H1 (cell line): ENCODE measurements at regions of chr1 and their contacts with region 1.

Region 1: GRCh38 chr1:204128964-204129896 is 22.6 kb downstream of the ETNK2 start:
- DNase-seq: peak; percentile 56 to 94
- H3K4me3 ChIP-seq: peak overlapping the region in 2 of 4 experiments; percentile 19 to 47; a peak in 3 of 8 replicates
- H3K27ac ChIP-seq: peak overlapping the region; percentile 53; the same call in 1 of the 2 replicates
- H3K4me1 ChIP-seq: peaks cover 4 to 24% (median 7%) of the 10 kb centered on the region in 4 experiments
- H3K27me3 ChIP-seq: no peaks in the 10 kb centered on the region; a peak in 1 of 7 replicates
- CTCF ChIP-seq: peak in 2 of 3 experiments; percentile 83 to 84; a peak in 3 of 4 replicates
- EP300 ChIP-seq: no peak
- POLR2A ChIP-seq: peak in 1 of 2 experiments; percentile 49; a peak in 1 of 3 replicates
- RAD21 ChIP-seq: peak; percentile 81 to 88

Region 2: GRCh38 chr1:204013052-204013451 is 116.2 kb before region 1 on chr1:
- CTCF ChIA-PET with region 1: interaction called, 10 read pairs
- POLR2A ChIA-PET with region 1: no interaction called
- DNase-seq: no peak
- H3K4me3 ChIP-seq: no peak overlapping the region
- H3K27ac ChIP-seq: no peak overlapping the region
- H3K4me1 ChIP-seq: peaks cover 0 to 7% (median 0%) of the 10 kb centered on the region in 4 experiments; a peak in 2 of 7 replicates
- H3K27me3 ChIP-seq: no peaks in the 10 kb centered on the region
- CTCF ChIP-seq: no peak
- EP300 ChIP-seq: no peak
- POLR2A ChIP-seq: no peak
- RAD21 ChIP-seq: no peak

Region 3: GRCh38 chr1:204080163-204080903 is 48.9 kb before region 1 on chr1:
- CTCF ChIA-PET with region 1: interaction called, 107 read pairs
- POLR2A ChIA-PET with region 1: interaction called, 15 read pairs
- DNase-seq: peak; percentile 97
- H3K4me3 ChIP-seq: peak overlapping the region in 3 of 4 experiments; percentile 18 to 49 (median 36); a peak in 5 of 8 replicates
- H3K27ac ChIP-seq: peak overlapping the region; percentile 87
- H3K4me1 ChIP-seq: peaks cover 40 to 79% (median 69%) of the 10 kb centered on the region in 4 experiments
- H3K27me3 ChIP-seq: no peaks in the 10 kb centered on the region
- CTCF ChIP-seq: no peak
- EP300 ChIP-seq: peak in 1 of 2 experiments; percentile 82; a peak in 1 of 3 replicates
- POLR2A ChIP-seq: peak; percentile 66 to 83
- RAD21 ChIP-seq: no peak; a peak in 2 of 4 replicates

Region 4: DNA sequence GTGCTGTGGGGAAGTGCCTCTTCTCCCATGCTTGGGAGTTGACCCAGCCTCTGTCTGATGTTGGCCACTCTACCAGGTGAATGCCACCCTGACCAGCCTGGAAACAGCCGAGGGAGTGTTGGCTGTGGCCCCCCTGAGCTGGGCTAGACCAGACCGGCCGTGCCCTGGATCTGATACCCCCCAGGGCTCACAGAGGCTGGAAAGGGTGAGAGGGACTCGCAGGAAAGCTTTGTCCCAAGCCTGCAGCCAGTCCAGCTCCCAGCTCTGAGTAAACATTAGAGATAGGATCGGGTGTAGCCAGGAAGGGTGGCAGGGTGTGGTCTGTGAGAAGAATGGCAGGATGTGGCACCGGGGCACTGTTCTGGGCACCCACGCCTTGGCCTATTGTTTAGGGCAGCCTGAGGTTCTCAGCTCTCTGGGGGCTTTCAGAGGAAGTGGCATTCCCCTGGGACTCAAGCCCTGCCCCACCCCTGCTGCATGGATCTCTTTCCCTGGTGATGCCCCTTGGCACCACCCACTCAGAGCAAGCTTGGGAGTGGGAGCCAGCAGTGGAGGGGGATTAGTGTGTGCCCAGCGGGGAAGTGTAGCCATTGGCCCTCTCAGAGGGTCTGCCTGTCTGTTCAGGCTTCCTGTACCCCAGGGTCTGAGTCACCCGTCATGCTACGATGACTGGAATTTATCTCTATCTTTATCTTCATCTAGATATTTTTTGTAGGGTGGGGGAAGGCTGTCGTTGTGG is 24.9 kb before region 1 on chr1:
- CTCF ChIA-PET with region 1: interaction called, 11 read pairs
- POLR2A ChIA-PET with region 1: interaction called, 7 read pairs
- DNase-seq: no peak
- H3K4me3 ChIP-seq: no peak overlapping the region
- H3K27ac ChIP-seq: no peak overlapping the region
- H3K4me1 ChIP-seq: peaks cover 27 to 55% (median 36%) of the 10 kb centered on the region in 4 experiments
- H3K27me3 ChIP-seq: no peaks in the 10 kb centered on the region
- CTCF ChIP-seq: no peak
- EP300 ChIP-seq: no peak
- POLR2A ChIP-seq: no peak
- RAD21 ChIP-seq: no peak

Region 5: GRCh38 chr1:204145033-204145504 is 15.8 kb after region 1 on chr1:
- CTCF ChIA-PET with region 1: interaction called, 99 read pairs
- POLR2A ChIA-PET with region 1: interaction called, 8 read pairs
- DNase-seq: no peak
- H3K4me3 ChIP-seq: no peak overlapping the region
- H3K27ac ChIP-seq: no peak overlapping the region
- H3K4me1 ChIP-seq: peaks cover 5 to 29% (median 18%) of the 10 kb centered on the region in 4 experiments
- H3K27me3 ChIP-seq: no peaks in the 10 kb centered on the region; a peak in 1 of 7 replicates
- CTCF ChIP-seq: no peak
- EP300 ChIP-seq: no peak
- POLR2A ChIP-seq: no peak
- RAD21 ChIP-seq: no peak

Region 6: DNA sequence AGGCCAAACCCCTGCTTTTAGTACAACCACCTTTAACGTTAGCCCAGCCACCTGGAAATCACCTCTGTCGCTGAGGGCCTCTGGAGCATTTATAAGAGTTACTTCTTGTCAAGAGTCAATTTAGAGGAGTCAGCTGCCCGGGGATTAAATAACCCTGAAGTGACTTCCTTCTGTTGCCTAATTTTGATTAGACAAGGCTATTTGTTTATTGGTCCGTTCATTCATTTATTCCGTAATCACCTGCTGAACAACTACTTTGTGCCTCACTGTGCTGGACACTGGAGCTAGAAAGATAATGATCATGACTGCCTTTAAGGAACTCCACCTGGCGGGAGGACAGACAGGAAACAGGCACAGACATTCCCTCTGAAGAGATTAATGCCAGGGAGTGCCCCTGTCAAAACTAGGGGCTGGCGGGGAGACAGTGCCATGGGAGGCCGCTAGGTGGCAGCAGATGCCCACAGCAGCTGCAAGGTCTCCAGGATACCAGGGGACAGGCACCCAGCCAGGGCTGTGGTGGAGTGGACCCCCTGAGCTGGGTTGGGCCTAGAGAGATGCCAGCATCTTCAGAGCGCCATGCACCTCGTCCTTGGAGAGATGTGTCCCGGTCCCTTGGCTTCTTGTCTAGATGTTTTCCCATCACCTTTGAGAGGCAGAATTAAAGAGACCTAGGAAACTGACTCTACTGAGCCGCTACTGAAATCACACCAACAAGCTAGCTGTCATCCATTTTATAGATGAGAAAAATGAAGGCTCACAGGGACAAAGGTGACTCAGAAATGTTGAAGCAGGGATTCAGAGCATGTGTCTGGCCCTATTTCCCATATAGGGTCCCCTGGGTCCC is 33.2 kb after region 1 on chr1:
- CTCF ChIA-PET with region 1: interaction called, 21 read pairs
- POLR2A ChIA-PET with region 1: no interaction called
- DNase-seq: peak; percentile 63 to 100
- H3K4me3 ChIP-seq: no peak overlapping the region
- H3K27ac ChIP-seq: no peak overlapping the region
- H3K4me1 ChIP-seq: no peaks in the 10 kb centered on the region; a peak in 1 of 7 replicates
- H3K27me3 ChIP-seq: no peaks in the 10 kb centered on the region
- CTCF ChIP-seq: peak; percentile 99
- EP300 ChIP-seq: no peak
- POLR2A ChIP-seq: no peak
- RAD21 ChIP-seq: peak; percentile 100

Region 7: GRCh38 chr1:204181116-204181515 is 51.9 kb after region 1 on chr1:
- CTCF ChIA-PET with region 1: no interaction called
- POLR2A ChIA-PET with region 1: no interaction called
- DNase-seq: no peak
- H3K4me3 ChIP-seq: no peak overlapping the region
- H3K27ac ChIP-seq: no peak overlapping the region
- H3K4me1 ChIP-seq: no peaks in the 10 kb centered on the region
- H3K27me3 ChIP-seq: 0 out of 7 replicates have a peak, but pooled peaks cover 0 to 2% (median 0%) of the 10 kb centered on the region in 4 experiments
- CTCF ChIP-seq: no peak
- EP300 ChIP-seq: no peak
- POLR2A ChIP-seq: no peak
- RAD21 ChIP-seq: no peak

Region 8: GRCh38 chr1:204266504-204267034 is 137.3 kb after region 1 on chr1:
- CTCF ChIA-PET with region 1: no interaction called
- POLR2A ChIA-PET with region 1: no interaction called
- DNase-seq: no peak
- H3K4me3 ChIP-seq: no peak overlapping the region
- H3K27ac ChIP-seq: no peak overlapping the region
- H3K4me1 ChIP-seq: no peaks in the 10 kb centered on the region
- H3K27me3 ChIP-seq: no peaks in the 10 kb centered on the region
- CTCF ChIP-seq: no peak
- EP300 ChIP-seq: no peak
- POLR2A ChIP-seq: no peak
- RAD21 ChIP-seq: no peak